GM12878 (cell line): ENCODE measurements at regions of chr2 and their contacts with region 1.

Region 1: GRCh38 chr2:161104054-161104553 is 56.1 kb upstream of the TANK start:
- DNase-seq: peak; percentile 72
- ATAC-seq: peak; percentile 89
- H3K4me3 ChIP-seq: 0 out of 2 replicates have a peak overlapping the region, but pooled peaks have one; percentile 6
- H3K27ac ChIP-seq: peak overlapping the region; percentile 55
- H3K4me1 ChIP-seq: peaks cover 19% of the 10 kb centered on the region
- H3K27me3 ChIP-seq: no peaks in the 10 kb centered on the region
- CTCF ChIP-seq: no peak
- EP300 ChIP-seq: peak in 1 of 2 experiments; percentile 89; a peak in 3 of 4 replicates
- POLR2A ChIP-seq: no peak
- RAD21 ChIP-seq: peak; percentile 16; the same call in 1 of the 2 replicates

Region 2: GRCh38 chr2:161068670-161069069 is 35.4 kb before region 1 on chr2:
- CTCF ChIA-PET with region 1: interaction called, 23 read pairs
- POLR2A ChIA-PET with region 1: interaction called, 5 read pairs
- RAD21 ChIA-PET with region 1: interaction called, 14 read pairs
- SMC1A ChIA-PET with region 1: interaction called, 17 read pairs
- in situ Hi-C with region 1: no loop called
- intact Hi-C with region 1: no loop called
- DNase-seq: no peak
- ATAC-seq: peak; percentile 65
- H3K4me3 ChIP-seq: no peak overlapping the region
- H3K27ac ChIP-seq: no peak overlapping the region
- H3K4me1 ChIP-seq: no peaks in the 10 kb centered on the region; the same call in 1 of the 2 replicates
- H3K27me3 ChIP-seq: no peaks in the 10 kb centered on the region
- CTCF ChIP-seq: no peak
- EP300 ChIP-seq: no peak
- POLR2A ChIP-seq: no peak
- RAD21 ChIP-seq: no peak

Region 3: DNA sequence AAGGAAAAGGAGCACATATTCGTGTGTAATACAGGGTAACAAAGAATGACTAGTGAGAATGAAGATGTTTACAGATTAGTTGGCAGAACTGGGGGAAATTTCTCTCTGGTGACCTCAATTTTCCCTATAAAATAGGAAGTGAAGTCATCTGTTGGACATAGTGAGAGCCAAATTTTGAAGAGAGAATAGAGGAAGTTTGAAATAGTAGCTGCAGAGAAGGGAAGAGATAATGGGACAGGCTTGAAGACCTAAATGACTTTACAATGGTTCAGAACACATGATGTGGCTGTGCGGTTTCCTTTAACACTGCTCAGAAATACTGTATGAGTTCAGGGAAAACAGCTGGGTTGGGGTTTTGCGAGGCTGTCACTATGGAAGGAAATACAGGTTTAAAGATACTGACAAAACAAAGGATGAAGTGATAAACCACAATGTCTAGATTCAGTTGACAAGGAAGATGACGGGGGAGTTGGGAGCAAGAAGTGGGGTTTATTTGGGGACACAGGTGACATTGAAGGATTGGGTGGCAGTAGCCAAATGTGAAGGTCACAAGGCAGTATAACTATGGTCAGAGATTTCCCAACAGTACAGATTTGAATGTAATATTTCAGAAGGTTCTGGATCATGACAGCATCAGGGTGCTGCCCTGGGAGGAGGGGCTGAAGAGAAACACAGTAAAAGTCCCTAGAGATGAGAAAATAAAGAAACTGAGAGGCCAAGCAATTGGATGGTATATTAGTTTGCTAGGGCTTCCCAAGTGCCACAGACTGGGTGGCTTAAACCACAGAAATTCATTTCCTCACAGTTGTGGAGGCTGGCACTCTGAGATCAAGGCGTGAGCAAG is 26.5 kb before region 1 on chr2:
- CTCF ChIA-PET with region 1: interaction called, 4 read pairs
- POLR2A ChIA-PET with region 1: interaction called, 7 read pairs
- RAD21 ChIA-PET with region 1: interaction called, 20 read pairs
- SMC1A ChIA-PET with region 1: interaction called, 6 read pairs
- in situ Hi-C with region 1: no loop called
- intact Hi-C with region 1: loop called (anchors 1 kb)
- DNase-seq: peak; percentile 81
- ATAC-seq: peak; percentile 90
- H3K4me3 ChIP-seq: no peak overlapping the region
- H3K27ac ChIP-seq: peak overlapping the region; percentile 71
- H3K4me1 ChIP-seq: peaks cover 20% of the 10 kb centered on the region
- H3K27me3 ChIP-seq: no peaks in the 10 kb centered on the region
- CTCF ChIP-seq: no peak
- EP300 ChIP-seq: peak; percentile 70 to 74
- POLR2A ChIP-seq: no peak
- RAD21 ChIP-seq: 0 out of 2 replicates have a peak, but pooled peaks have one; percentile 5

Region 4: GRCh38 chr2:161122772-161123530 is 18.8 kb after region 1 on chr2:
- CTCF ChIA-PET with region 1: interaction called, 68 read pairs
- POLR2A ChIA-PET with region 1: interaction called, 16 read pairs
- RAD21 ChIA-PET with region 1: interaction called, 8 read pairs
- SMC1A ChIA-PET with region 1: interaction called, 79 read pairs
- in situ Hi-C with region 1: no loop called
- intact Hi-C with region 1: no loop called
- DNase-seq: no peak
- ATAC-seq: peak; percentile 81
- H3K4me3 ChIP-seq: no peak overlapping the region
- H3K27ac ChIP-seq: no peak overlapping the region; the same call in 1 of the 2 replicates
- H3K4me1 ChIP-seq: no peaks in the 10 kb centered on the region
- H3K27me3 ChIP-seq: no peaks in the 10 kb centered on the region
- CTCF ChIP-seq: no peak
- EP300 ChIP-seq: no peak
- POLR2A ChIP-seq: no peak
- RAD21 ChIP-seq: no peak

Region 5: DNA sequence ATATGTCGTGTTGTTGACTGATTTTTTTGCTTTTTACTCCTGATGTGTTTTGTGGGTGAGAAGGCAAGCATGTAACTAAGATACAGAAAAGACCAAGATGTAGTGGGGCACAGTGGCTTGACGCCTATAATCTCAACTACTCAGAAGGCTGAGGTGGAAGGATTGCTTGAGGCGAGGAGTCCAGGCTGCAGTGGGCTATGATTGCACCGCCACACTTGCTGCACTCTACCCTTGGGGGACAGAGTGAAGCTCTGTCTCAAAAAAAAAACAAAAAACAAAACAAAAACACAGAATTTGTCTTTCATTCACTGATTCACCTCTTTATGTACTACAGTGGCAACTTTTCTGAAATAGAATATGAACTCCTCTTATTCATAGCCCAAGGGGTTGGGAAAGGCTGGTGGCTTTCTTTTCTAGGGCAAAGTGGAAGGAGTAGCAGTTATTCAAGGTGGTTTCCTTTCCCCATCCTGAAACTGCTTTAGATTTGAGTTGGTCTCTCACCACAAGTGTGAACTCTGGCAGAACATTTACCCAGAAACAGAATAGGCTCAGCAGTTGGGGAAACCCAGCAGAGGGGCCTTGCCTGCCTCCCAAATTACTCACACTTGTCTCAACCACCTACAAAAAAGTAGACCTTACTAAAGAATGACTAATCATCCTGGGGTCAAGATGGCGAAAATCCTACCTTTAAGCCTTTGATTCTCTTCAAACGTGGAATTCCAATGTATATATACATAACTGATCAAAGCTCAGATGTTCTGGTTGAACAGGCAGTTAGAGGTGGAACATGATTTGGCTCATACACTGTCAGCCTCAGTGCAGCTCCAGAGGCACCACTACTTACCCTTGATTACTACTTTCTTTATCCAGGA is 62.7 kb after region 1 on chr2:
- CTCF ChIA-PET with region 1: interaction called, 3 read pairs
- POLR2A ChIA-PET with region 1: interaction called, 5 read pairs
- RAD21 ChIA-PET with region 1: interaction called, 6 read pairs
- SMC1A ChIA-PET with region 1: interaction called, 12 read pairs
- in situ Hi-C with region 1: no loop called
- intact Hi-C with region 1: loop called (anchors 5 kb)
- DNase-seq: peak; percentile 95
- ATAC-seq: peak; percentile 77
- H3K4me3 ChIP-seq: peak overlapping the region; percentile 35; the same call in 1 of the 2 replicates
- H3K27ac ChIP-seq: peak overlapping the region; percentile 89
- H3K4me1 ChIP-seq: peaks cover 56% of the 10 kb centered on the region
- H3K27me3 ChIP-seq: no peaks in the 10 kb centered on the region
- CTCF ChIP-seq: no peak
- EP300 ChIP-seq: peak; percentile 91 to 96
- POLR2A ChIP-seq: no peak
- RAD21 ChIP-seq: no peak

Region 6: GRCh38 chr2:161414042-161415033 is 310.2 kb after region 1 on chr2:
- CTCF ChIA-PET with region 1: no interaction called
- POLR2A ChIA-PET with region 1: no interaction called
- RAD21 ChIA-PET with region 1: no interaction called
- SMC1A ChIA-PET with region 1: no interaction called
- in situ Hi-C with region 1: no loop called
- intact Hi-C with region 1: no loop called
- DNase-seq: no peak
- ATAC-seq: peak; percentile 57
- H3K4me3 ChIP-seq: peak overlapping the region; percentile 39
- H3K27ac ChIP-seq: no peak overlapping the region
- H3K4me1 ChIP-seq: peaks cover 5% of the 10 kb centered on the region; the same call in 1 of the 2 replicates
- H3K27me3 ChIP-seq: peaks cover 23 to 38% of the 10 kb centered on the region in 2 experiments
- CTCF ChIP-seq: no peak
- EP300 ChIP-seq: no peak
- POLR2A ChIP-seq: no peak
- RAD21 ChIP-seq: no peak